Dendritic cell treated with granulocyte-macrophage colony-stimulating factor and Interleukin-4, amounts not matched to agents 40 ng/mL and 50 ng/mL, for 4 days (primary cell): ENCODE measurements at regions of chr12 and their contacts with region 1.

Region 1: GRCh38 chr12:98698603-98699463 is 53.7 kb downstream of the APAF1 start:
- H3K4me3 Mint-ChIP-seq: no peak overlapping the region
- H3K27ac Mint-ChIP-seq: no peak overlapping the region
- H3K4me1 Mint-ChIP-seq: peaks cover 12% of the 10 kb centered on the region
- H3K27me3 Mint-ChIP-seq: no peaks in the 10 kb centered on the region

Region 2: GRCh38 chr12:98709022-98709421 is 10.2 kb after region 1 on chr12:
- intact Hi-C with region 1: no loop called
- H3K4me3 Mint-ChIP-seq: no peak overlapping the region
- H3K27ac Mint-ChIP-seq: no peak overlapping the region
- H3K4me1 Mint-ChIP-seq: no peaks in the 10 kb centered on the region
- H3K27me3 Mint-ChIP-seq: no peaks in the 10 kb centered on the region

Region 3: GRCh38 chr12:98998697-98999299 is 300.0 kb after region 1 on chr12:
- intact Hi-C with region 1: loop called (anchors 2 kb)
- H3K4me3 Mint-ChIP-seq: no peak overlapping the region
- H3K27ac Mint-ChIP-seq: no peak overlapping the region
- H3K4me1 Mint-ChIP-seq: no peaks in the 10 kb centered on the region
- H3K27me3 Mint-ChIP-seq: no peaks in the 10 kb centered on the region

Region 4: DNA sequence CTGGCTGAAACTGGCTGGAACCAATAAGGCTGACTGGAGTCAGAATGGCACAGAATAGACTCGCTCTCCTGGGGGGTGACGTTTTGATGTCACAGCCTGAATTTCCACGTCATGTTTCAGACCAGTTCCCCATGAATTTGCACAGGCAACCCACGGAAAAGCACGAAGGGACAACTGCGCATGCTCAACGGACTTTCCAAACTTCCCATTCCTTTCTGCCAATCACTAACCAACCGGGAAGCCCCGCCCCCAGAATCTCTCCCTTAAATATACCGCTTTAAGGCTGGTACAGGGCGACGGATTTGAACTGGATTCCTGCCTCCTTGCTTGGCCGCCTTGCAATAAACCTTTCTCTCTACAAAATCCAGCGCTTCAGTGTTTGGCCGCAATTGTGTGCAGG is 381.0 kb after region 1 on chr12:
- intact Hi-C with region 1: no loop called
- H3K4me3 Mint-ChIP-seq: no peak overlapping the region
- H3K27ac Mint-ChIP-seq: no peak overlapping the region
- H3K4me1 Mint-ChIP-seq: no peaks in the 10 kb centered on the region
- H3K27me3 Mint-ChIP-seq: no peaks in the 10 kb centered on the region